Activated B cell treated with CpG ODN at 0.5 μM for 24 hours (primary cell): ENCODE measurements at regions of chr3 and their contacts with region 1.

Region 1: GRCh38 chr3:72847751-72848702 is at the start of gene SHQ1:
- DNase-seq: peak; percentile 84
- ATAC-seq: peak; percentile 95
- H3K4me3 Mint-ChIP-seq: peak within 1 kb of the TSS; percentile 92
- H3K27ac Mint-ChIP-seq: peak within 1 kb of the TSS; percentile 79
- H3K4me1 Mint-ChIP-seq: peaks cover 45% of the 10 kb centered on the region
- H3K27me3 Mint-ChIP-seq: no peaks in the 10 kb centered on the region
- CTCF ChIP-seq: no peak
- total RNA-seq, gene SHQ1: 21.2 and 25.3 TPM in 2 replicates

Region 2: DNA sequence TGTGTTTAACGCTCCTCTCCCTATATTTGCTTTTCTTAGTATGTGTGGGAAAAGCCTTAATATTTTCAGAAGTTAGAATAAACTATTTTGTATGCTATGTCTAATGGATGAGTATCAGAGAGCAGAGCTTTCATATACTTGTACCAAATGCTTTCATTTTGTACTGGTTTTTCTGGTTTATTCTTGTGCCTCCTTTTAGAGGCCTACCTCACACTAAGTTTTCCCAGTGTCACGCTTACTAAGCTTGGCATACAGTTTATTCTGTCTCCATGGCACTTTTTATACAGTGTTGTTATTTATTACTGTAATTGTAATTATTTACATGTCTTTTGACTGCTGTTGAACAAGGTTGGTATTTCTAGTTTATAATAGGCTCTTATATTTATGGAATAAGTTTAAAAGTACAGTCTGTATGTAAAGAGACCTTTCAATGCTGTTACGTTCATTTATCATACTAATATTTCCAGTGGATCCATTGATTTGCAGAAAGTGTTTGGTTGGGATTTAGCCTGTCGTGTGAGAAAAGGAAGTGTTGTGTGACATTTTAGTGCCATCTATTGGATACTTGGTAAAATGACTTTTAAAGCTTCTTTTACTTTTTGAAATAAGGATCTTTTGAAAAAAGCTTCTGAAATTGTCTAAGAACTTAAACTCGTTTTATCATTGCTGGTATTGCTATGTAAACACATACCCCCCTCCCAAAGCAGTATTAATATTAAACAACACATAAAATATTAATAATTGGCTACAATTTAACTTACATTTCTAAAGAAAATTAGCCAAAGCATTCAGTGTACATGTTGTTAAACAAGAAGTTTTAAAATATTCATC is 208.2 kb after region 1 on chr3:
- CTCF ChIA-PET with region 1: interaction called, 6 read pairs
- POLR2A ChIA-PET with region 1: no interaction called
- intact Hi-C with region 1: loop called (anchors 1 kb)
- DNase-seq: no peak
- ATAC-seq: no peak
- H3K4me3 Mint-ChIP-seq: no peak overlapping the region
- H3K27ac Mint-ChIP-seq: no peak overlapping the region
- H3K4me1 Mint-ChIP-seq: peaks cover 3% of the 10 kb centered on the region
- H3K27me3 Mint-ChIP-seq: no peaks in the 10 kb centered on the region
- CTCF ChIP-seq: no peak